Prostate gland (tissue), 2 donors: ENCODE measurements at regions of chr10 and their contacts with region 1.

Region 1: GRCh38 chr10:75019370-75019769 is 92.1 kb upstream of the SAMD8 start:
- DNase-seq: no peak
- H3K4me3 ChIP-seq: no peak overlapping the region
- H3K27ac ChIP-seq: no peak overlapping the region
- H3K4me1 ChIP-seq: peaks cover 3% of the 10 kb centered on the region
- H3K27me3 ChIP-seq: no peaks in the 10 kb centered on the region
- CTCF ChIP-seq: peak in 3 of 4 experiments; percentile 23 to 52 (median 50)
- POLR2A ChIP-seq: no peak

Region 2: DNA sequence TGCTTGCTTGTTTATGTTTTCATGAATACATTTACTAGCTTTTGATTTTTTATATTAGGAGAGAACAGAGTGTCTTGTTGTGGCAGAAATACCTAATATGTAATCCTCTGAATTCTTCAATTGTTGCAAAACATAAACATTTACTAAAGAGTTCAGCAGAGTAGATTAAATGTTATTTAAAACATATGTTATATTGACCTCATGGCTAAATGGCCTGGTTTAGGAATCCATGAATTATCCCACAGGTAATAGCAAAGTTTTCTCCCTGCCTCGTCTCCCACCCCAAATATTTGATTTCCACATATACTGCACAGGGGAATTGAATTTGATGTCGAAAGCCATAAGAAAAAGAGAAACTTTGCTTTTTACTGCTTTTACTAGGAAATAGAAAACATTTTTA is 756.5 kb before region 1 on chr10:
- intact Hi-C with region 1: loop called (anchors 2 kb)
- DNase-seq: no peak
- H3K4me3 ChIP-seq: no peak overlapping the region
- H3K27ac ChIP-seq: no peak overlapping the region
- H3K4me1 ChIP-seq: no peaks in the 10 kb centered on the region
- H3K27me3 ChIP-seq: no peaks in the 10 kb centered on the region
- CTCF ChIP-seq: no peak
- POLR2A ChIP-seq: no peak

Region 3: DNA sequence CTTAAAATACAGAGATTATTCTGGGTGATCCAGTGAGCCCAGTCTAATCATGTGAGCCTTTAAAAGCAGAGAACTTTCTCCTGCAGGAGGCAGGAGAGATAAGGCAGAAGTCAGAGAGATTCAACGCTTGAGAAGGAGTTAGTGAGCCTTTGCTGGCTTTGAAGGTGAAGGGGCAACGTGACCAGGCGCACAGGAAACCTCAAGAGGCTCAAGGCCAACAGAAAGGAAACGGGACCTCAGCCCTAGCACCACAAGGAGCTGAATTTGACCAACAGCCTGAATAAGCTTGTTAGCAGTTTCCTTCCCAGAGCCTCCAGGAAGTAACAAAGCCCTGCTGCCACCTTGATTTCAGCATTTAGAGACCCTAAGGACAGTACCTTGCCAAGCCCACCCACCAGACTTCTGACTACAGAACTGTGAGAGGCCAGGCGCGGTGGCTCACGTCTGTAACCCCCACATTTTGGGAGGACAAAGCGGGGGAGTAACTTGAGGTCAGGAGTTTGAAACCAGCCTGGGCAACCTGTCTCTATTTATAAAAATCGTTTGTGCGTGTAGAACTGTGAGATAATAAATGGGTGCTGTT is 280.3 kb before region 1 on chr10:
- intact Hi-C with region 1: loop called (anchors 5 kb)
- DNase-seq: no peak
- H3K4me3 ChIP-seq: no peak overlapping the region
- H3K27ac ChIP-seq: no peak overlapping the region
- H3K4me1 ChIP-seq: no peaks in the 10 kb centered on the region
- H3K27me3 ChIP-seq: no peaks in the 10 kb centered on the region
- CTCF ChIP-seq: peak in 1 of 4 experiments; percentile 18
- POLR2A ChIP-seq: no peak

Region 4: GRCh38 chr10:74826142-74827044 is 193.0 kb before region 1 on chr10 and contains the start of gene KAT6B:
- intact Hi-C with region 1: loop called (anchors 5 kb)
- DNase-seq: peak; percentile 100
- H3K4me3 ChIP-seq: peak within 1 kb of the TSS; percentile 89 to 98
- H3K27ac ChIP-seq: peak within 1 kb of the TSS; percentile 99
- H3K4me1 ChIP-seq: peaks cover 20% of the 10 kb centered on the region
- H3K27me3 ChIP-seq: no peaks in the 10 kb centered on the region
- CTCF ChIP-seq: peak in 1 of 4 experiments; percentile 50
- POLR2A ChIP-seq: peak; percentile 69
- total RNA-seq, gene KAT6B: 28.0 to 97.8 TPM

Region 5: DNA sequence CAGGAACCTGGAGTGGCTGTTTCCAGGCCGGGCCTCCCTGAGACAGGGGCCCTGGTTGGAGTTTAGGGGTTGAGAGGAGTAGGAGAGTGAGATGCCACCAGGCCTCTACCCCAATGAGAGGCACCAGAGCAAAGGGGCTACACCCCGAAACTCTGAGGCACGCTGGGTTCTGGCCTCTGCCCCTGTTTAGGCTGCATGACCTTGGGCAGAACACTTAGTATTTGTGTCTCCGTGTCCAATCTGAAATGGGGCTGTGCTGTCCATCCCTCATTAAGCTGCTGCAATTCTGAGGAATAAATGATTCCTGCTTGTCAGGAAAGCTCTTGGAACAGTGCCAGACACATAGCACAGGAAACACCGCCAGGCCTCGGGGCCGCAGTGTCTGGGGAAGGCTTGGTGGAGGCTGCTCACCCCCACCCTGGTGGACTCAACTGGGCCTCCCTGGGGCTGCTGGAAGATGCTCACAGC is 51.6 kb after region 1 on chr10:
- intact Hi-C with region 1: no loop called
- DNase-seq: no peak
- H3K4me3 ChIP-seq: no peak overlapping the region
- H3K27ac ChIP-seq: no peak overlapping the region
- H3K4me1 ChIP-seq: no peaks in the 10 kb centered on the region
- H3K27me3 ChIP-seq: no peaks in the 10 kb centered on the region
- CTCF ChIP-seq: no peak
- POLR2A ChIP-seq: no peak

Region 6: DNA sequence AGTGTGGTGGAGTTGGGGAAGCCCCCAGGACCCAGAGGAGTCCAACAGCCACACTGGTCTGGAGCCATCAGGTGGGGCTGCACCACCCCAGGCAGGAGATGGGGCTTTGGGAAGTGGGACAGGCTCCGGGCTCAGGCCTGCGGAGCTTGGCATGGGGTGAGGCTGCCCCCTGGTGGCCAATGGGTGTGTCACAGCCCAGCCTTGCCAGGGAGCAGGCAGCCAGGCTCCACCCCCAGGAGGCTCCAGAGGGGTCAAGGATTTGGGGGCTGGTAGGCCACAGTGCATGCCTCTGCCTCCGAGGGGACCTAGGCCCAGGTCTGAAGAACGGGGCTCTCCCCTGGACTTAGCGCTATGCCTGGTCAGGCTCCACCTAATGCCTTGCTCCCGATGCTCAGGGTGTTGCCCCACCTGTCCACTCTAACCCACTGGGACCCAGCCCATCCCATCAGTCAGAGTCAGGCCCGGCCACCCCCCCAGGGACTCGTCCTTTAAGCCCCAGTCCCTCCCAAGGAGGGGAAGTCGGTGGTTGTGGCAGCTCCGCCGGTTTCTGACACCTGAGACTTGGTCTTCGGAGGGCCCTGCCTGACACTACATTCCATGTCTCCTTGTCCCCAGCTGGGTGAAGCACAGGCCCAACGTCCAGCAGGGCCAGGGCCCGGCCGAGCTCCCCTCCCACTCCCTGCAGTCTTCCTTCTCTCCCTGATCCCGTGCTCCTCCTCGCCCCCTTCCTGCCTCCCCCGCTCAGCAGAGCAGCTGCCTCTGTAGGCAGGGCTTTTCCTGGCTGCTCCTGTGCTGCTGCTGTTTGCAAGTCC is 80.8 kb after region 1 on chr10:
- intact Hi-C with region 1: loop called (anchors 5 kb)
- DNase-seq: peak; percentile 66
- H3K4me3 ChIP-seq: no peak overlapping the region
- H3K27ac ChIP-seq: no peak overlapping the region
- H3K4me1 ChIP-seq: no peaks in the 10 kb centered on the region
- H3K27me3 ChIP-seq: no peaks in the 10 kb centered on the region
- CTCF ChIP-seq: peak; percentile 94 to 98 (median 96)
- POLR2A ChIP-seq: no peak